Gastrocnemius medialis (tissue), 4 donors: ENCODE measurements at regions of chr1 and their contacts with region 1.

Region 1: DNA sequence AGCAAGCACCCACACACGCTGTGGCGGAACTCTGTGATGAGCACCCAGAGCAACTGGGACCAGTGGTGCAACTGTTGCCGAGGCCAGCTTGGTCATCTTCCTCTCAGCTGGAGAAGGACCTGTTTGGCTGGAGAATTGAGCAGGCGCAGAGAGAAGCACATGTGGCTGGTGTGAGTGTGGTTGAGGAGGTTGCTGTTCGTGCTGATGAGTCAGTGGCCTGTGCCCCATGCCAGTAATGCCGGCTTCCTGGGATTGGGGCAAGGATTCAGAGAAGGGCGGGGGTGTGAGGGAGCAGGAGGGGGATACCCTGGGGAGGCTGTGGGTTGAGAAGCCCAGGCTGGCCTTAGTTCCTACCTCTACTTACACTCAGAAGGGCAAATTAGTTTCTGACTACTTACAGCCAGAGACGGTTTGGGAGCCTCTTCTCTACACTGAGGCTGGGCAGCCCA is 57.5 kb upstream of the EPS8L3 start:
- DNase-seq: peak; percentile 79 to 89
- ATAC-seq: peak; percentile 71 to 80
- H3K4me3 ChIP-seq: no peak overlapping the region
- H3K27ac ChIP-seq: peak overlapping the region; percentile 55 to 83 (median 81)
- H3K4me1 ChIP-seq: peaks cover 36 to 41% of the 10 kb centered on the region in 2 donors
- H3K27me3 ChIP-seq: no peaks in the 10 kb centered on the region
- CTCF ChIP-seq: no peak
- POLR2A ChIP-seq: peak in 1 of 2 donors; percentile 16

Region 2: GRCh38 chr1:109910123-109910962 is 89.1 kb after region 1 on chr1 and contains the start of gene CSF1:
- in situ Hi-C with region 1: no loop called
- intact Hi-C with region 1: loop called (anchors 5 kb)
- DNase-seq: peak; percentile 51 to 74
- ATAC-seq: peak; percentile 80 to 84
- H3K4me3 ChIP-seq: peak within 1 kb of the TSS; percentile 64 to 92 (median 72)
- H3K27ac ChIP-seq: peak within 1 kb of the TSS; percentile 72 to 87 (median 82)
- H3K4me1 ChIP-seq: peaks cover 35 to 40% of the 10 kb centered on the region in 2 donors
- H3K27me3 ChIP-seq: no peaks in the 10 kb centered on the region
- CTCF ChIP-seq: peak in 1 of 5 experiments; percentile 9
- POLR2A ChIP-seq: peak; percentile 50 to 54
- total RNA-seq, gene CSF1: 14.6 to 31.1 (median 19.6) TPM